PC-3 (cell line): ENCODE measurements at regions of chr5 and their contacts with region 1.

Region 1: GRCh38 chr5:43191740-43192557 is at the start of gene NIM1K:
- DNase-seq: peak; percentile 30
- ATAC-seq: peak; percentile 59
- H3K4me3 ChIP-seq: peak within 1 kb of the TSS; percentile 71
- H3K27ac ChIP-seq: peak within 1 kb of the TSS; percentile 48
- H3K4me1 ChIP-seq: peaks cover 16% of the 10 kb centered on the region
- H3K27me3 ChIP-seq: no peaks in the 10 kb centered on the region
- CTCF ChIP-seq: no peak
- total RNA-seq, gene NIM1K: 0.17 and 0.26 TPM in 2 replicates

Region 2: GRCh38 chr5:42436051-42436450 is 755.9 kb before region 1 on chr5:
- CTCF ChIA-PET with region 1: no interaction called
- POLR2A ChIA-PET with region 1: no interaction called
- intact Hi-C with region 1: no loop called
- DNase-seq: no peak
- ATAC-seq: no peak
- H3K4me3 ChIP-seq: no peak overlapping the region
- H3K27ac ChIP-seq: no peak overlapping the region
- H3K4me1 ChIP-seq: peaks cover 8% of the 10 kb centered on the region
- H3K27me3 ChIP-seq: no peaks in the 10 kb centered on the region
- CTCF ChIP-seq: no peak

Region 3: GRCh38 chr5:43019614-43020293 is 172.2 kb before region 1 on chr5:
- CTCF ChIA-PET with region 1: no interaction called
- POLR2A ChIA-PET with region 1: interaction called, 12 read pairs
- intact Hi-C with region 1: no loop called
- DNase-seq: peak; percentile 97
- ATAC-seq: peak; percentile 66
- H3K4me3 ChIP-seq: peak overlapping the region; percentile 80
- H3K27ac ChIP-seq: peak overlapping the region; percentile 85
- H3K4me1 ChIP-seq: peaks cover 39% of the 10 kb centered on the region
- H3K27me3 ChIP-seq: no peaks in the 10 kb centered on the region
- CTCF ChIP-seq: peak; percentile 67

Region 4: GRCh38 chr5:43044181-43044914 is 147.6 kb before region 1 on chr5:
- CTCF ChIA-PET with region 1: no interaction called
- POLR2A ChIA-PET with region 1: no interaction called
- intact Hi-C with region 1: no loop called
- DNase-seq: peak; percentile 81
- ATAC-seq: peak; percentile 19
- H3K4me3 ChIP-seq: peak overlapping the region; percentile 64
- H3K27ac ChIP-seq: peak overlapping the region; percentile 64
- H3K4me1 ChIP-seq: peaks cover 32% of the 10 kb centered on the region
- H3K27me3 ChIP-seq: no peaks in the 10 kb centered on the region
- CTCF ChIP-seq: no peak

Region 5: DNA sequence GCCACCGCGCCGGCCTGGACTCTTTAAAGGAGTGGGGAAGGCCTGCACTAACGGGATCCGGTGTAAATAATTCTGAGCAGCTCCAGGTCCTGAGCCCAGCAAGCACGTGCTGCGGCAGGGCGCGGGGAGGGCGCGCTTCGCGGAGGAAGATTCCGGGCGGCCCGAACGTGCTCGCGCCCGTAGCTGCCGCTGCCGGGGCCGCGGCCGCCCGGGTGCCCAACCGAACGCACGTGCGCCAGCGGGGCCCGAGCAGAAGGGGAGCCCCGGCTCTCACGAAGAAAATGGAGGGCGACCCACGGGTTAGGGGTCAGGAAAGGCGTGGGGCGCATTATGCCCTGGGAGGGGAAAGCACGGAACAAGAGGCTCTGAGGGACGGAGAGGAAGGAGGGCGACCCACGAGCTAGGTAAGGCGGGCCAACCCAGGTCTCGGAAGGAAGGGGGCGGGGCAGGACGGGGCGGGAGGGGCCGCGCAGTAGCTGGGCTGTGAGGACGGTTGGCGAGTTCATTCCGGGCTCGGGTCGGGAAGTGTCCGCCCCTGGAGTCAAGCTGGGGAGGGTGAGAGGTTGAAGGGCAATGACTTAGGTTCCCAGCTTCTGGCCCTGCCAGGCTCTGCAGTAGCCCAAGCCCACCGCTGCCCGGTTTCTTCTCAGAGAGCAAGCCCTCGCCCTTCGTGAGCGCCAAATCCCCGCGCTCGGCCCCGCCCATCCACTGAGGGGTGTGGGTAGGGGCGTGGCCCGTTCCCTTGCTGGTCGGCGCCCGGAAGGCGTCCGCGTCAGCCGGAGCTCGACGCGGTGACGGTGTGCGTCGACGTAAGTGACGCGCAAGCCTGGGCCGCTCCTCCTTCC is 71.0 kb before region 1 on chr5 and contains the start of gene ZNF131:
- CTCF ChIA-PET with region 1: no interaction called
- POLR2A ChIA-PET with region 1: interaction called, 4 read pairs
- intact Hi-C with region 1: loop called (anchors 2 kb)
- DNase-seq: peak; percentile 99
- ATAC-seq: peak; percentile 94
- H3K4me3 ChIP-seq: peak within 1 kb of the TSS; percentile 79
- H3K27ac ChIP-seq: peak within 1 kb of the TSS; percentile 92
- H3K4me1 ChIP-seq: peaks cover 27% of the 10 kb centered on the region
- H3K27me3 ChIP-seq: no peaks in the 10 kb centered on the region
- CTCF ChIP-seq: no peak
- total RNA-seq, gene ZNF131: 37.3 and 41.5 TPM in 2 replicates

Region 6: GRCh38 chr5:43207601-43208000 is 15.7 kb after region 1 on chr5:
- CTCF ChIA-PET with region 1: no interaction called
- POLR2A ChIA-PET with region 1: interaction called, 5 read pairs
- intact Hi-C with region 1: loop called (anchors 1 kb)
- DNase-seq: peak; percentile 66
- ATAC-seq: no peak
- H3K4me3 ChIP-seq: no peak overlapping the region
- H3K27ac ChIP-seq: no peak overlapping the region
- H3K4me1 ChIP-seq: peaks cover 27% of the 10 kb centered on the region
- H3K27me3 ChIP-seq: no peaks in the 10 kb centered on the region
- CTCF ChIP-seq: no peak

Region 7: GRCh38 chr5:43313035-43313853 is 121.3 kb after region 1 on chr5 and contains the start of gene HMGCS1:
- CTCF ChIA-PET with region 1: no interaction called
- POLR2A ChIA-PET with region 1: no interaction called
- intact Hi-C with region 1: loop called (anchors 5 kb)
- DNase-seq: peak; percentile 99
- ATAC-seq: peak; percentile 90
- H3K4me3 ChIP-seq: peak within 1 kb of the TSS; percentile 93
- H3K27ac ChIP-seq: peak within 1 kb of the TSS; percentile 89
- H3K4me1 ChIP-seq: peaks cover 64% of the 10 kb centered on the region
- H3K27me3 ChIP-seq: no peaks in the 10 kb centered on the region
- CTCF ChIP-seq: 0 out of 2 replicates have a peak, but pooled peaks have one; percentile 28
- total RNA-seq, gene HMGCS1: 31.4 and 39.7 TPM in 2 replicates